ENCODE measurements at regions of chr6 and their contacts with region 1.

Region 1: DNA sequence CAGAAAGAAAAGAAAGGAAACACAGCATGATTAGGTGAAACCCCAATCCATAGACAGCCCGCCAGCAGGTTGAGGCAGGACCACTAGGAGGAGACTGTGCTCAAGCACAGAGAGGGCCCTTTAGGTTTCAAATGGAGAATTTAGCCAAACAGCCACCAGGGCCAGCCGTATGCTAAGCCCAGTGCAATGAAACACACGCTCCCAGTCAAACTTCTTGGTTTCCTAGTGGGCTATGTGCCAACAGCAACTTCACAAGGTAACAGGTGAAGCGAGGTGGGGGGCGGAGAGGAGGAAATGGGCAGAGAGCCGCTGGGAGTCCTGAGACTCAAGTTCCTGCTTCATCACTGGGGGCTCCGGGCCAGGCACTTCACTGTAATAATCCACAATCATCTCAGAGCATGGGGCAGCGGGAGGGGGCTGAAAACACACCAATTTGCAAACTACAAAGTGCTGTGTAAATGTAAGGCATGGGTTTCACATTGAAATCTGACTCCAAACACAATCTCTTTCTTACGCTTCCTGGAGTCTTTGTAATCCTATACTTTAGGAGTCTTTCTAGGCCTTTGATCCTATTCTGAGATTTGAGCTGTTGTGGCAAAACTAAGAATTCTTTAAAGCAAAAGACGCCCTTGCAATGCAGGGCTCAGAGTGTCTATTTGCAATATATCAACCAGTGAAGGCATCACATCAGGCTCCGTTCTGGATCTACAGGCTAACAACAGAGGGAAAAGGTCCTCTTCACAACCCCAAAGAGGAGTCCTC is 117.3 kb downstream of the OPRM1 start:
- DNase-seq: no peak

Region 2: DNA sequence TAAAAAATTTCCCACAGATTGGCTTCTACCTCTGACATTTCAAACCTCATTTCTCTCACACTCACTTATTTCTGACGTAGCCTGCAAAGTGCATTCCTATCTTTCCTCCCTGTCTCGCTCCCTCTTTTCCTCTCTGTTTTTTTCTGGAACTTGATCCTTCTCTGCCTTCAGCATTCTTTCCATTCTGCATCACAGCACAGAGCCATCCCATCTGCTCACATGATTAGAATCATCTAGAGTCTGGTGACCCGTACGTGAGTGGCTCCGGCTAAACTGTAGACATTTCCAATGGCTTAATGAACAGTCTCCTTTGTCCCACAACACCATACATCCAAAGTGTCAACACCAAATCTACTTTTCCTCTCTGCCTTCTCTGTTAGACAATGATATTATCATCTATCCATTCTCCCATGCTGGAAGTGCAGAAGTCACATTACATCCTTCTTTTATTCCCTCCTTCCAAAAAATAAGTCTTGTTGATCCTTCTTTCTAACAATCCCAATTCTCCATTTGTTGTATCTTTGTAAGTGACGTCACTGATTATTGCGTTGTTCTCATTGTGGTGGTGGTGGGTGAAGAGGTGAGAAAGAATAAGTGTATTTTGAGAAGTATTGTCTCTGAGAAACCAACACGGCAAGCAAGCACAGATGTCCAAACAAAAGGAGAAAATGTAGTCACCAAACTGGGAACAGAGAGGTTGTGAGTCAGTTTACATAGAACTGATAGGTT is 75.7 kb before region 1 on chr6:
- intact Hi-C with region 1: no loop called
- DNase-seq: no peak

Region 3: DNA sequence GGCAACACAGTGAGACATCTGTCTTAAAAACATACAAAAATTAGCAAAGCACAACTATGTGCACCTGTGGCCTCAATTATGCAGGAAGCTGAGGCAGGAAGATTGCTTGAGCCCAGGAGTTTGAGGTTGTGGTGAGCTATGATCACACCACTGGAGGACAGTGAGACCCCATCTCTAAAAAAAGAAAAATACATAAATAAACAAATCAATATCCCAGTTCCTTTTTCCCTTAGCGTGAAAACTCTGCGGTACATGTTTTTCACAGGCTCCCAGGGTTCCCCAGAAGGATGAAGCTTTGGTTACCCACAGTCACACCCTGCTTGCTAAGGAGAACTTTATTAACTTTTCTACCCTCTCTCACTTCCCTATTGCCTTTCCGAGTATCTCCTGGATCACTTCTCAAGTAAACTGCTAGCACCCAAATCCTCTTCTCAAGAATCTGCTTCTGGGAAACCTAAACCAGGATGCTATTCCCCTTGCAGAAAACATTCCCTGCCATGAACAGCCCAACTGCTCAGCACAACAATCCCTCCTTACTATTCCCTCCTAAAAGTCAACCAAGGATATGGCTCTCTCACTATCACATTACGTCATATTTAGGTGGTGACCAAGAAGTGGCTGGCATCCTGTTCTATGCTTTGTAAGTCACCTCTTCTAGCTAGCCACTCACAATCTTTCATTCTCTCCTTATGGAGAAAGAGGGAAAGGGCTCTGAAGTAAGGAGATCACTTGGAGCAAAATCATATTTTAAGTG is 77.9 kb after region 1 on chr6:
- intact Hi-C with region 1: no loop called
- DNase-seq: no peak

Region 4: DNA sequence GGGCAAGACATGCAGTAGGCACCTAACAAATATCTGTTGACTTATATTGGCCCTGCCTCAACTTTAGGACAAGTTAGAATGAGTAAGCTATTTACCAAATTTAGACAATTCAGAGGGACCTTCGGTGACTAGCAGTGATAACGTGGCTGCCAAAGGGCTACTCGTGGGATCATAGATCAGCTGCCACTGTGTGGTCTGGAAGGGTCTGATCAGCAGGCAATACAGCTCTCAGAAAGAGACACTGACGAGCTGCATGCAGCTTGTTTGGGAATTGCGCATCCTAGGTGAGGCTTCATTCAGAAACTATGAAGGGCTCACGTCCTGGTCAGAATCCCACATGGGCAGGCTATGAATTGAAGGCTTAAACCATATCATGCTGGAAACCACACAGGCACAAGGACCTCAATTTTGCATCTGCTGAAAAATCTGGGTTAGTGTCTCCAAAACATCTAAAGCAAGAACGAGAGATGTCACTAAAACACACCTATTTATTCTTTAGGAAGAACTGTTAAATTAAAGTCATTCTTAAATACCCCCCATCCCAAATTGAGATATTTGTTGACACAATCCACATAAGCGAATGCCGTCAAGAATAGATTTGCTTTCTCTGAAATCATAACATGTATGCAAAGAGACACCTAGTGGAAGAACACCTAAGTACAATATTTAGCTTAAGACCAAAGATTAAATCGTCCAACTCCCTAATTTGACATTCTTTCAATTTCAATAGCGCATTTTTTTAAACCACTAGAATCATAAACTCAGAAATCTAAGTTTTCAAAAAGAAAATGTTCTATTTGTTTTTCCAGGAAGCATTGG is 120.7 kb after region 1 on chr6:
- intact Hi-C with region 1: loop called (anchors 2 kb)
- DNase-seq: no peak

Region 5: DNA sequence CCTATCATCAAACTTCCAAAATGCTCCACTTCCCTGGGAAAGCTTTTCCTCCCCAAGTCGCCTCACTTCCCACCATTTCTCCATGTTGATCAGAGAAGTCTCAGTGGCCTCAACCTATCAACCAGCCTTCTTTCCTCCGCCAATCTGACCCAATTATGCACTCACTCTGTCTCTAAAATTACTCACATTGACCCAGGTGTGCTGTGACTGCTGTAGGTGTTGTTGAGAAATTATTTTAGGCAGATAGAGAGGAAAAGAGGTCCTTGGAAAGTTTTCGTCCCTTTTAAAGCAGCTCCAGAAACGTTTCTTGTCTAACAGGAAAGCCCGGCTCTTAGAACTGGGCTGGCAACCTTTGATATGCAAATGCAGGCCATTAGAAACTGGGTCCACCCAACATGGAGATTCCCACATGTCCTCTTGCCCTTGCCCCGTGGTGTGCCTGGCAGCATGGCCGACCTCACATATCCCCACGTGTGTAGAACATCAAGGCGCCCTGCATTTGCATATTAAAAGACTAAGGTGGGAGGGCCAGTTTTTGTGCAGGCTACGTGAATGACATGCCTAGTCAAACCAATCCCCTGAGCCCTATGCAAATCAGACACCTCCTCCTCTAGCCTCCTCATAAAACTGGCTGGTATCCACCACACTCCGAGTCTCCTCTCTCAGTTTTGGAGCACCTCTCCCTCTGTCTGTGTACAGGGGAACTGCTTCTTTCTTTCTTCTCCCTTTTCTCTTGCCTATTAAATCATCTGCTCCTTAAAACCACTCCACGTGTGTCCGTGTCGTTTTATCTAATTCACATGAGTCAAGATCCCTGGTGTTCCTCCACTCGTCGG is 187.4 kb after region 1 on chr6:
- intact Hi-C with region 1: loop called (anchors 10 kb)
- DNase-seq: no peak

Region 6: GRCh38 chr6:154370545-154370944 is 214.2 kb after region 1 on chr6:
- intact Hi-C with region 1: loop called (anchors 10 kb)
- DNase-seq: no peak

Region 7: DNA sequence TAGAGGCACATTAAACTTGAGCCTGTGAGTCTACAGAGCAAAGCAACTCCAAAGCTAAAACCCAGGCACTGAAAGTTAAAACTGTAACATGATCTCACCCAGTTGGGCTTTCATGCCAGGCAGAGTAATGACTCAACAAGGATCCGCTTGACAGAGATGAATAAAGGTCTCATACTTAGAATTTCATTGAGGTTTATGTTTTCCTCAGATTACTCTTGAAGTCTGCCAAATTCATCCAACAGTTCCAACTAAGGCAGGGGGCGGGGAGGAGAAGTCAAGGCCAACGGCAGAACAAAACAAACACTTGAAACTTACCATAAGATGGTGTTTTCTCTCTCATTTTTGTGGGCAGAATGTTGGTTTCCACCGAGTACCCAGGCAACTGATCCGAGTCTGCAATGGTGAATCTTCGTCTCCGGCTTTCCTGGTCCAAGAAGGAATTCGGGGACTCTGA is 254.3 kb after region 1 on chr6:
- intact Hi-C with region 1: loop called (anchors 10 kb)
- DNase-seq: no peak